ENCODE measurements at regions of chr22 and their contacts with region 1.

Region 1: DNA sequence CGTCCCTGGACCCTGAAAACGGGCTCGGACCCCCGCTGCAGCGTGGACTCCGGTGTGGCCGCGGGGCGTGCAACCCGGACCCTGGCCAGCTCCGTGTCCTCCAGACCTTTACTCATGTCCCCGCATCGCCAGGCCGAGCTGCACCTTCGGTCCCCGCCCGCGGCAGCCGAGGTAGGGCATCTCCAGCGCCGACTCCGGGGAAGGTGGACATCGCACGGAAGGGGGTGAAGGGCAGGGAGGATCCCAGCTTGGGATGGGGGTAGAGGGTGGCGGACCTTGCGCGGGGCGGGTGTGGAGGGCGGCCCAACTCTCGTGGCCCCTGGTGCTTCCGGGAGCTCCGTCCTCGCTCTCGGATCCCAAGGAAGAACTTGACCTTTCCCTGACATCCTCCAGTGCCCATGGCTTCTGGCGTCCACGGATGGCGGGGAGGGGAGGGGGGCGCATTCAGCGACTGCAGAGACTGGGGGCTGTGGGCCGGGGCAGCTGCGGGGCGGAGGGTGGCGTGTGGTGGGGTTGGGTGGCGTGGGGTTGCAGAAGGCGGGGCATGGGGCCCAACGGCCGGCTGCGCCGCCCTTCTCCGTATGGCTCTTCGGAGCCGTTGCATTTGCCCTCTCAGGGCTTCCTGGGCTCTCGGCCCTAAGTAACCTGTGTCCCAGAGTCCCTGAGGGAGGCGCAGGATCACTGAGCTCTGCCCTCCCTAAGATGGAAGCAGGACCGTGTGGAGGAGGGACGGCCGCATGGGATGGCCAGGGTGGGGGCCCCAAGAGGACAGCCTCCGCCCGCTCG is 9.5 kb upstream of the AIFM3 start:
- DNase-seq: peak; percentile 52
- H3K4me3 Mint-ChIP-seq: peak overlapping the region; percentile 91
- H3K27ac Mint-ChIP-seq: peak overlapping the region; percentile 82
- H3K4me1 Mint-ChIP-seq: peaks cover 28% of the 10 kb centered on the region
- H3K27me3 Mint-ChIP-seq: no peaks in the 10 kb centered on the region
- CTCF ChIP-seq: no peak

Region 2: GRCh38 chr22:20671409-20672081 is 286.0 kb before region 1 on chr22:
- CTCF ChIA-PET with region 1: no interaction called
- intact Hi-C with region 1: no loop called
- DNase-seq: no peak
- H3K4me3 Mint-ChIP-seq: no peak overlapping the region
- H3K27ac Mint-ChIP-seq: no peak overlapping the region
- H3K4me1 Mint-ChIP-seq: no peaks in the 10 kb centered on the region
- H3K27me3 Mint-ChIP-seq: peaks cover 36% of the 10 kb centered on the region
- CTCF ChIP-seq: no peak

Region 3: GRCh38 chr22:20725987-20726558 is 231.4 kb before region 1 on chr22:
- CTCF ChIA-PET with region 1: no interaction called
- intact Hi-C with region 1: no loop called
- DNase-seq: no peak
- H3K4me3 Mint-ChIP-seq: no peak overlapping the region
- H3K27ac Mint-ChIP-seq: no peak overlapping the region
- H3K4me1 Mint-ChIP-seq: no peaks in the 10 kb centered on the region
- H3K27me3 Mint-ChIP-seq: no peaks in the 10 kb centered on the region
- CTCF ChIP-seq: no peak

Region 4: DNA sequence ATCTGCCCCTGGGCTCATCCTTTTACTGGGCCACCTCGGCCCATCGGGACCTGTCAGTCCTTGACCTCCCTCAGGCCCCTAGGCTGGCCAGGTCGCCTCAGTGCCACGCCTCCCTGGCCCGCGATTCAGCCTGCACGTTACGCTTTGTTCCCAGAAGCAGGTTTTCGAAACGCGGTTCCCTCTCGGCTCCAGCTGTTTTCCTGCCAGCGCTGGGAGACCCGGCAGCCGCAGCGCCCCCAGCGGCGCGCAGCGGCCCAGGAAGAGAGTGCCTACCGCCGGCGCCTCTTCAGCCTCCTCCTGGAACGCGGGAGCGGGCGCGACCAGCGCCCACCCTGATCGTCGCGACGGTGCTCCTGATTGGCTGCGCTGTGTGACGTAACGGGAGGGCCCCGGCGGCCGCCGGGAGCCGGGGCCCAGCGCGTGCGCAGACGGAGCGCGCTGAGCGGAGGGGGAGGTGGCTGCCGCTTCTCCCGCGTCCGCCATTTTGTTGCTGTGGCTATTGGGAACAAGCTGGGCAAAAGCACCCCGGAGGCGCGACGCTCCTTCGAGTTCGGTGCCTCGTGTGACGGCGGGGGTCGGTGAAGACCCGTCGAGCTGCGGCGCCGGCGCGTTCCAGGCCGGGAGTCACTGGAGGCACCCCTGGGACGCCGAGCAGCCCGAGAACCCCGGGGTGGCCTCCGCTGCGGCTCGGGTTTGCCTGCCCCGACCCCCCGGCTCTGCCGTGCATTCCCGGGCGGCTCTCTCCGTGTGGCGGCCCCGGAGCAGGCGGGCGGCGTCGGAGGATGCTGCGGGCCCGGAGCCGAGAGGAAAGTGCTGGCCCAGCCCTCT is 40.3 kb before region 1 on chr22 and contains the start of gene CRKL:
- CTCF ChIA-PET with region 1: interaction called, 19 read pairs
- intact Hi-C with region 1: loop called (anchors 5 kb)
- DNase-seq: peak; percentile 97
- H3K4me3 Mint-ChIP-seq: peak within 1 kb of the TSS; percentile 76
- H3K27ac Mint-ChIP-seq: peak within 1 kb of the TSS; percentile 81
- H3K4me1 Mint-ChIP-seq: peaks cover 21% of the 10 kb centered on the region
- H3K27me3 Mint-ChIP-seq: no peaks in the 10 kb centered on the region
- CTCF ChIP-seq: peak; percentile 90
- total RNA-seq, gene CRKL: 68.0 and 69.9 TPM in 2 replicates

Region 5: GRCh38 chr22:20981787-20982562 is 24.5 kb after region 1 on chr22 and contains the start of gene LZTR1:
- CTCF ChIA-PET with region 1: interaction called, 11 read pairs
- intact Hi-C with region 1: no loop called
- DNase-seq: peak; percentile 80
- H3K4me3 Mint-ChIP-seq: peak within 1 kb of the TSS; percentile 97
- H3K27ac Mint-ChIP-seq: peak within 1 kb of the TSS; percentile 66
- H3K4me1 Mint-ChIP-seq: no peaks in the 10 kb centered on the region
- H3K27me3 Mint-ChIP-seq: peaks cover 11% of the 10 kb centered on the region
- CTCF ChIP-seq: peak; percentile 53
- total RNA-seq, gene LZTR1: 49.3 and 55.4 TPM in 2 replicates

Region 6: DNA sequence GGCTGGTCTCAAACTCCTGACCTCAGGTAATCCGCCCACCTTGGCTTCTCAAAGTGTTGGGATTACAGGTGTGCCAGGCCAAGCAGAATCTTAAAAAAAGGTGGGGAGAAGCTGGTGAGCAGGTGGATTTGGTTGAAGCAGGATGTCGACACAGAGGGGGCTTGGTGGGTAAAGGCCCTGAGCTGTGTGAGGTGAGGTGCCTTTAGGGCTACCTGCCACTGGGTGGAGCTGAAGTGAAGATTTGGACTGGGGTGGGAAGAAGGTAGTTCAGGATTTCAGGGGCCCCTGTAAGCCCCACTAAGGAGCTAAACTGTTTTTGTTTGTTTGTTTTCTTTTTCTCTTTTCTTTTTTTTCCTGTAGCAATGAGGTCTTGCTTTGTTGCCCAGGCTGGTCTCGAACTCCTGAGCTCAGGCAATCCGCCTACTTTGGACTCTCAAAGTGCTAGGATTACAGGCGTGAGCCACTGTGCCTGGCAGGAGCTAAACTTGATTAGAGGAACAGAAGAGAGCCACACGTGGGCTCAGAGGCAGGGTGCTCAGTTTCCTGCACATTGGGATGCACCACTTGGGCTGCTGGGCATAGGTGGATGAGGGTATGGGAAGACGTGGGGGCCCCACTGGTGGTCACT is 63.4 kb after region 1 on chr22:
- CTCF ChIA-PET with region 1: no interaction called
- intact Hi-C with region 1: no loop called
- DNase-seq: no peak
- H3K4me3 Mint-ChIP-seq: no peak overlapping the region
- H3K27ac Mint-ChIP-seq: no peak overlapping the region
- H3K4me1 Mint-ChIP-seq: no peaks in the 10 kb centered on the region
- H3K27me3 Mint-ChIP-seq: peaks cover 62% of the 10 kb centered on the region
- CTCF ChIP-seq: peak; percentile 24

Measured in Calu3 (cell line).